Common myeloid progenitor, CD34-positive (primary cell): ENCODE measurements at regions of chr5 and their contacts with region 1.

Region 1: GRCh38 chr5:31232273-31232888 is 38.9 kb downstream of the CDH6 start:
- DNase-seq: peak; percentile 46 to 67 (median 64)
- H3K4me3 ChIP-seq: no peak overlapping the region
- H3K27ac ChIP-seq: no peak overlapping the region
- H3K4me1 ChIP-seq: no peaks in the 10 kb centered on the region
- H3K27me3 ChIP-seq: no peaks in the 10 kb centered on the region

Region 2: DNA sequence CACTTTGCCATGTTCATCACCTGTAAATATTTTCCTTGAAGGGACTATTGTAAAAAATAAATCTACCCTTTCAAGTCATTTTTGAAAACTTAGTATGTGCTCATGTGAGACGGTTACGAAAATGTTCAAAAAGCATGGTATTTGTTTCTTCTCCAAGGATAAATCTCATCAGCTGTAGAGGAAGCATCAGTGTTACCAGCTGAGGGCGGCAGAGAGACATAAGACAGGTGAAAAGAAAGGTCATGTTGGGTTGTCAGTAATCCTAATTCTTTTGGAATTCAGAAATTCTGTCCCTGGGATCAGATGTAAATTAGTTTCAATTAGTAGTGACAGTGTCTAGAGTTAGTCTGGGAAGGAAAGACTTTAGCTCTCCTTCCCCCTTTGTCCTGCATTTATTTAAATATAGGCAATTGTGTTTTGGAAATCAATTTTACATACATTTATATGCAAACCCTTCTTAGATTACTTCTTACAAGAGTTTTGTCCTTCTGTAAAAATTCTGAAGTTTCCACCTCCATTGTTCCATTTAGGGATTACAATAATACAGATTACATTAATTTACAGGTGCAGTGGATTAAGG is 830.8 kb before region 1 on chr5:
- CTCF ChIA-PET with region 1: interaction called, 12 read pairs
- POLR2A ChIA-PET with region 1: no interaction called
- DNase-seq: peak; percentile 22 to 42 (median 35)
- H3K4me3 ChIP-seq: no peak overlapping the region
- H3K27ac ChIP-seq: no peak overlapping the region
- H3K4me1 ChIP-seq: no peaks in the 10 kb centered on the region
- H3K27me3 ChIP-seq: no peaks in the 10 kb centered on the region

Region 3: DNA sequence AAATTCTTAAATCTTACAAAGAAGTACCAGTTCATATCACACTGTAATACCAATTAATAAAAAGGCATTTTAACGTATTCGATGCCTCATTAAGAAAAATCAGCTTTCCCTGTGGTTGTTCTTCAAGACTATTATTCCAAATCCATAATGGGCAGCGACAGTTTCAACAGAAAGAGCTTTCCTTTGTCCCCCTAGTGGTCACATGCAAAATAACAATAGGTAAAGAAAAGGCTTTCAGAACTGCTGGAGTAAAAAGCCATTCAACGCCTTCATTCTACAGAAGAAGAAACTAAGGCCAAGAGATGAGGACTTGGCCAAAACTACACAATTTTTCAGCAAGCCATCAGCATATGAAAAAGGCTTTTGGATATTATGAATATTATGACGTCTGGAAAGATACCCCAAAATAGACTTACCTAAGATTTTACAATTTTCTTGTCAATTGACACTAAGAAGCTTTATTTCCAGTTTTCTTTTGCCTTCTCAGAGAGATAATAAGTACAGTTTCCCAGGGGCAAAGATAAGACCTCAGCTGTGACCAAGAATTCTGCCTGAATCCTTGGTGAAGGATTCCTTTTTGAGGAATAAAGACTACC is 45.6 kb before region 1 on chr5:
- CTCF ChIA-PET with region 1: interaction called, 11 read pairs
- POLR2A ChIA-PET with region 1: no interaction called
- DNase-seq: peak in 2 of 3 donors; percentile 53 to 54
- H3K4me3 ChIP-seq: no peak overlapping the region
- H3K27ac ChIP-seq: no peak overlapping the region
- H3K4me1 ChIP-seq: no peaks in the 10 kb centered on the region
- H3K27me3 ChIP-seq: peaks cover 0 to 10% (median 7%) of the 10 kb centered on the region in 5 experiments

Region 4: DNA sequence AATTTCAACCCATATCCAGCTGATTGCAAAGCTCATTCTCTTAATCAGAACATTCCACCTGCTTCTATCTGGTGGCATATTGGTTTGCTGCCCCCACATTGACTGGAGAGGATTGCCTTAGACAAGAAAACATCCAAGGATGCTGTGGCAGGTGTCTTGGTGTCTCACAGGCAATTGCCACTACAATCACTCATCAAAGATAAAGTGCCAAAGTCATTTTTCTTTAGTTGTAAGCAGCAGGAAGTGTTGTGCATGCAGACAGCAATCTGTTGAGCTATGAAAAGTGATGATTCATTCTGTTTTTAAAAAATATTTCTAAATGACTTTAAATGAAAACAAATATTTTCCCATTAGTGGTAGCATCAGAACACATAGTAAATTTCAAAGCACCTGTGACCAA is 15.0 kb after region 1 on chr5:
- CTCF ChIA-PET with region 1: interaction called, 21 read pairs
- POLR2A ChIA-PET with region 1: no interaction called
- DNase-seq: peak; percentile 8 to 83 (median 70)
- H3K4me3 ChIP-seq: no peak overlapping the region
- H3K27ac ChIP-seq: peak overlapping the region in 1 of 2 experiments; percentile 63
- H3K4me1 ChIP-seq: peaks cover 6 to 30% (median 27%) of the 10 kb centered on the region in 4 experiments
- H3K27me3 ChIP-seq: no peaks in the 10 kb centered on the region

Region 5: GRCh38 chr5:31270396-31270795 is 38.0 kb after region 1 on chr5:
- CTCF ChIA-PET with region 1: interaction called, 10 read pairs
- POLR2A ChIA-PET with region 1: no interaction called
- DNase-seq: peak; percentile 26 to 52 (median 45)
- H3K4me3 ChIP-seq: no peak overlapping the region
- H3K27ac ChIP-seq: no peak overlapping the region
- H3K4me1 ChIP-seq: no peaks in the 10 kb centered on the region
- H3K27me3 ChIP-seq: peaks cover 0 to 3% (median 0%) of the 10 kb centered on the region in 5 experiments